GM18951 (cell line): ENCODE measurements at regions of chr1 and their contacts with region 1.

Region 1: GRCh38 chr1:114346480-114347029 is 164.4 kb downstream of the TRIM33 start:
- POLR2A ChIP-seq: no peak

Region 2: DNA sequence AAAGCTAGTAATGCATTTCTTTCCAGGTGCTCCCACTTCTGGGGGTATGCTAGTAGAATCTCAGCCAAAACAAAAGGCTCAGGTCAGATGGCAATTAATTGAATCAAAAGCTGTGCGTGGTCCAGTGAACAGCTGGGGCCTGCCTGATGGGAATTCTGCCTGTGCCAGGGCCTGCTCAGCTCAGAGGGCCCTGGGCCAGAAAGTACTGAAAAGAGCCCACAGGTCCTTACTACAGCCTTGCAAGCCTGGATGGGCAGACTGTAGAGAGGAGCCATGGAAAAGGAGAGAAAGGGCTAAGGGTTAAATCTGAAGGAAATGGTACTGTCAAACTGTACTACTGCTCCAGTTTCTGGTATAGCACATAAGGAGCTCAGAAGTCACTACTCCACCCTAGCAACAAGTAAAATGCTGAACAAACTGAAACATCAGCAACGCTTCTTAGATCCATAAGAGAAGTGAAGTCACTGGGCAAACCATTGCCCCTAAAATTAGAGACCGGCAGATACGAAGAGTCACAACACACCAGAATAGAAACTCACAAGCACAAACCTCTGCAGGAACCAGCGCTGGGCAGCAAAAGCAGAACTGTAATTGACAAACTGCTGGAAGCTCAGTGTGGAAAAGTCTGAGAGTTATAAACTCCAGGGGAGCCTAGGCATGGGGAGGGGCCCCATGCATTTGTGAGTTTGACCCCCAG is 71.8 kb before region 1 on chr1:
- in situ Hi-C with region 1: no loop called
- POLR2A ChIP-seq: no peak

Region 3: GRCh38 chr1:114558544-114558943 is 212.0 kb after region 1 on chr1:
- in situ Hi-C with region 1: loop called (anchors 5 kb)
- POLR2A ChIP-seq: no peak